ENCODE measurements at regions of chr17 and their contacts with region 1.

Region 1: DNA sequence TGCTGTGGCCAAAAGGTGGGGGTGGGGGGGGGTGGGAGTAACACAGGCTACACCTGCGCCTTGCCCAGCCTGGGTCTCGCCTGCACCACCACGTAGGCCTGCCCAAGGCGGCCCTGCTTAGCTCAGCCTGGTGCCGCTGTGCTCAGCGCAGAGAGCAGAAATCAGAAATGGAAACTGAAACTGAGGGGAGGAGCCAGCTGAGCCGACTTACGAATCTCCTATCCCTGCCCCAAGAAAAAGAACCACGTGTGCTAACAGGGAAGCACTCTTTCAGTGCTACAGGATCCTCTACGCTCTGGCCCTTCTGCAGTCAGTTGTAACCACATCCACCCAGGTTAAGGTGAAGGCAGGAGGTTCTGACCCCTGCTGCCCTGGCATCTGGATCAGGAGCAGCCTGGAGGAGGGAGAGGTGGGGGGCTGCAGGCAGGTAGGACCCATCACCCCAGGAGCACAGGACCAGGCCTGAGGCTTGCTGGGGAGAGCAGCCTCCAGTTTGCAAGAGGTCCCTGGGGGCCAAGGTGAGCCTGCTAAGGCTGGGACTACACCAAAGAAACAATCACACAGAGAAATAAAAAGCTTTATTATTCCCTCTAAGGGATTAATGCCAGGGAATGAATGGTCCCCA is at the start of gene DHX58:
- DNase-seq: peak in 4 of 6 donors; percentile 76 to 78 (median 76)
- ATAC-seq: peak; percentile 81 to 91 (median 89)
- H3K4me3 ChIP-seq: peak within 1 kb of the TSS; percentile 21 to 56 (median 40)
- H3K27ac ChIP-seq: peak within 1 kb of the TSS; percentile 63 to 85 (median 76)
- H3K4me1 ChIP-seq: peaks cover 6 to 21% (median 15%) of the 10 kb centered on the region in 3 donors
- H3K27me3 ChIP-seq: no peaks in the 10 kb centered on the region
- CTCF ChIP-seq: no peak
- total RNA-seq, gene DHX58: 3.7 to 11.0 (median 6.1) TPM

Region 2: GRCh38 chr17:41750862-41751261 is 361.8 kb before region 1 on chr17:
- intact Hi-C with region 1: no loop called
- DNase-seq: no peak
- ATAC-seq: no peak
- H3K4me3 ChIP-seq: no peak overlapping the region
- H3K27ac ChIP-seq: no peak overlapping the region
- H3K4me1 ChIP-seq: no peaks in the 10 kb centered on the region
- H3K27me3 ChIP-seq: no peaks in the 10 kb centered on the region
- CTCF ChIP-seq: no peak

Region 3: GRCh38 chr17:41966463-41967140 is 146.1 kb before region 1 on chr17 and contains the start of gene CNP:
- intact Hi-C with region 1: loop called in 2 of 3 experiments (anchors 5 to 10 kb)
- DNase-seq: peak; percentile 89 to 96 (median 92)
- ATAC-seq: peak; percentile 75 to 90 (median 85)
- H3K4me3 ChIP-seq: peak within 1 kb of the TSS; percentile 86 to 95 (median 90)
- H3K27ac ChIP-seq: peak within 1 kb of the TSS; percentile 79 to 87 (median 82)
- H3K4me1 ChIP-seq: peaks cover 14 to 33% (median 19%) of the 10 kb centered on the region in 3 donors
- H3K27me3 ChIP-seq: no peaks in the 10 kb centered on the region
- CTCF ChIP-seq: no peak
- total RNA-seq, gene CNP: 26.3 to 45.8 (median 32.1) TPM

Region 4: GRCh38 chr17:42019509-42020404 is 92.9 kb before region 1 on chr17 and contains the start of gene NKIRAS2:
- intact Hi-C with region 1: loop called (anchors 5 to 10 kb)
- DNase-seq: peak; percentile 92 to 98 (median 94)
- ATAC-seq: peak; percentile 73 to 84 (median 82)
- H3K4me3 ChIP-seq: peak within 1 kb of the TSS; percentile 85 to 94 (median 90)
- H3K27ac ChIP-seq: peak within 1 kb of the TSS; percentile 44 to 73 (median 55)
- H3K4me1 ChIP-seq: peaks cover 24 to 35% (median 24%) of the 10 kb centered on the region in 3 donors
- H3K27me3 ChIP-seq: no peaks in the 10 kb centered on the region
- CTCF ChIP-seq: peak; percentile 83 to 94 (median 92)
- total RNA-seq, gene NKIRAS2: 6.5 to 14.7 (median 10.7) TPM

Region 5: DNA sequence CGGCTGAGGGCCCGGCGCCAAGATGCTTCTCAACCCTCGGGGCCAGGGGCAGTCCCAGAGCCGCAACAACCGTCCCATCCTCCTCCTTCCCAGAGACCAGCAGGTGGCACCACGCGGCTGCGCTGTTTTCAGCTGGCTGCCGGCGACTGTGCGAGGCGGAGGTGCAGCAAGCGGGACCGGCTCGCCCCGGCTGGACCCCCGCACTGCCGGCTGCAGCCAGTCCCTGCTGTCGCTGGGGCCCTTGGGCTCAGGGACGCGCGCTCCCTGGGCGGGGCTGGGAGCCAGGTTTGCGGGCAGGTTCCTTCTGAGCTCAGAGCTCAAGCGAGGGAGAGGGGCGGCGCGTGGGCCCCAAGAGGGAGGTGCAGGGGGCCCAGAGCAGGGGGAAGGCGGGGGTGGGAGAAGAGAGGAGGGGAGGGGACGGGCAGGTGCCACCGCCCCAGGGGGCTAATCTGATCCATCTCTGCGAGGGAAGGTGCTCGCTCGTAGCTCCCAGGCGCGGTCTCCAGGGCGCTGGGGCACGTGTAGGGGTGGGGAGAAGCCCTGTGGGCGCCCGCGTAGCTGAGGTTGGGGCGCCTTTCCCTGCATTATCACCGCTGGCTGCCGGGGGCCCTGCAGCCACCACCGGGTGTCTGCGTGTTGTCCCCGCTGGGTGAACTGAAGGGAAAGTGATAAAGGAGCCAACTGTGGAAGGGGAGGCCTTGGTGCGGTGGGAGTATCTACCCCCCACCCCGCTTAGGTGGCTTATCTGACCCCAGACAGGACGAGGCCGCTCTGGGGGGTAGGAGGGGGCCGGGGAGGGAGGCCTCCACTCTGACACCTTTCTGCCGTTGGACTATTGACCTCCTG is 199.8 kb after region 1 on chr17:
- intact Hi-C with region 1: no loop called
- DNase-seq: peak; percentile 69 to 90 (median 76)
- ATAC-seq: peak; percentile 65 to 86 (median 80)
- H3K4me3 ChIP-seq: no peak overlapping the region
- H3K27ac ChIP-seq: peak overlapping the region in 2 of 4 donors; percentile 33 to 44
- H3K4me1 ChIP-seq: peaks cover 0 to 1% (median 0%) of the 10 kb centered on the region in 3 donors
- H3K27me3 ChIP-seq: no peaks in the 10 kb centered on the region
- CTCF ChIP-seq: peak in 3 of 4 donors; percentile 14 to 24 (median 19)